ENCODE measurements at regions of chr3 and their contacts with region 1.

Region 1: GRCh38 chr3:187706971-187707370 is 4.6 kb upstream of the RTP2 start:
- DNase-seq: no peak
- H3K4me3 ChIP-seq: no peak overlapping the region
- H3K27ac ChIP-seq: no peak overlapping the region
- H3K4me1 ChIP-seq: no peaks in the 10 kb centered on the region
- H3K27me3 ChIP-seq: no peaks in the 10 kb centered on the region
- CTCF ChIP-seq: no peak
- EP300 ChIP-seq: no peak
- POLR2A ChIP-seq: no peak
- RAD21 ChIP-seq: no peak

Region 2: DNA sequence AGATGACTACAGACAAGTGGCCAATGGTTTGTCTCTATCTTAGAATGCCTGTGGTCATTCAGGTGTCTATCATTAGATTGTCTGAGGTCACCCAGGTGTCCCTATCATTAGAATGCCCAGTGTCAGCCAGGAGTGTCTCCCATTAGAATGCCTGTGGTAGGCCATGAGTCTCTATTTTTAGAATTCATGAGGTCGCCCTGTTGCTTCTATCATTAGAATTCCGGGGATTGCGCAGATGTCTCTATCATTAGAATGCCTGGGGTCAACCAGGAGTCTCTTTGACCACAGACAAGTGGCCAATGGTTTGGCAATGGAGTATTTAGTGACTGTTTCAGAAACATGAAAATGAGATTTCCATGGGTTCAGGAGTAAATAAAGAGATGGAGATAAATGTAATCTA is 12.2 kb before region 1 on chr3:
- CTCF ChIA-PET with region 1: interaction called, 63 read pairs
- POLR2A ChIA-PET with region 1: no interaction called
- DNase-seq: no peak
- H3K4me3 ChIP-seq: no peak overlapping the region
- H3K27ac ChIP-seq: no peak overlapping the region
- H3K4me1 ChIP-seq: no peaks in the 10 kb centered on the region
- H3K27me3 ChIP-seq: no peaks in the 10 kb centered on the region
- CTCF ChIP-seq: no peak
- EP300 ChIP-seq: no peak
- POLR2A ChIP-seq: no peak
- RAD21 ChIP-seq: no peak

Region 3: GRCh38 chr3:187719628-187720336 is 12.8 kb after region 1 on chr3:
- CTCF ChIA-PET with region 1: interaction called, 63 read pairs
- POLR2A ChIA-PET with region 1: no interaction called
- DNase-seq: no peak
- H3K4me3 ChIP-seq: no peak overlapping the region
- H3K27ac ChIP-seq: no peak overlapping the region
- H3K4me1 ChIP-seq: peaks cover 0 to 13% (median 4%) of the 10 kb centered on the region in 4 experiments; a peak in 6 of 7 replicates
- H3K27me3 ChIP-seq: no peaks in the 10 kb centered on the region
- CTCF ChIP-seq: no peak
- EP300 ChIP-seq: no peak
- POLR2A ChIP-seq: no peak
- RAD21 ChIP-seq: no peak